MCF 10A (cell line): ENCODE measurements at regions of chr5 and their contacts with region 1.

Region 1: DNA sequence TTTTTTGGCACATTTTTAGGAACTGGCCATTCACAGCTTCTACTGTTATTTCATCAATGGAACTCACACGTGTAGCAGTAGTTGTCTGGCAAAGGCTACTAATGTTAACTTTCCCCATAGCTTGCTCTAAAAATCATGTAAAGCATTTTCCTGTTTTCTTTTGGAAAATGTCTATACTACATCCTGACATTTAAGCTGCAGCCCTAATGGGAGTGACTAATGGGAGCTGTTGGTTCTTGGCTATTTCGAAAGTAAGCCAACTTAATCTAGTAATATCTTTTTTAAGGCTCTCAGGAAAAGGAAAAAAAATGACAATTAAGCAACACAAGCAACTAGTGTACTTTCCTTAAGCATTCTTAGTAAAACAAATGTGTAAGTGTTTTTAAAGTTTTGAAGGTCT is 169.2 kb downstream of the SLC12A2 start:
- DNase-seq: peak; percentile 42
- H3K4me3 Mint-ChIP-seq: no peak overlapping the region
- H3K27ac Mint-ChIP-seq: no peak overlapping the region
- H3K4me1 Mint-ChIP-seq: peaks cover 10% of the 10 kb centered on the region
- H3K27me3 Mint-ChIP-seq: no peaks in the 10 kb centered on the region
- CTCF ChIP-seq: no peak

Region 2: DNA sequence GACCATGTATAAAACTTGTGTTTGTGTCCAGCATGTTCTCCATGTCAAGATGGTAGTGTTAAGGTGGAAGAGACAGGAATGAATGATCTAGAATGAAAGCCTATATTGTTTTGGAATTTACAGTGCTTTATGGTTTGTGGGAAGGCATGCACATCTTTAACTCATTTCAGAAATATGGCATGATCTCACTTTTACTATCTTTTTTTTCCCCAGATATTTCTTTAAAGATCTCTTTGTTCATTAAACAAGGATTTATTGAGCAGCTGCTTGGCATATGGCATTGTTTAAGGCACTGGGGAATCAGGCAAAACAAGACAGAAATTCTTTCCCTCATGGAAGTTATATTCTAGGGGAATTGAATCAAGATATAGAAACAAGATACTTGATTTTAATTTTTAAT is 117.5 kb before region 1 on chr5:
- CTCF ChIA-PET with region 1: no interaction called
- POLR2A ChIA-PET with region 1: no interaction called
- intact Hi-C with region 1: no loop called
- DNase-seq: no peak
- H3K4me3 Mint-ChIP-seq: no peak overlapping the region
- H3K27ac Mint-ChIP-seq: no peak overlapping the region
- H3K4me1 Mint-ChIP-seq: no peaks in the 10 kb centered on the region
- H3K27me3 Mint-ChIP-seq: no peaks in the 10 kb centered on the region
- CTCF ChIP-seq: no peak

Region 3: GRCh38 chr5:128241051-128241695 is 11.6 kb before region 1 on chr5:
- CTCF ChIA-PET with region 1: interaction called, 13 read pairs
- POLR2A ChIA-PET with region 1: no interaction called
- intact Hi-C with region 1: no loop called
- DNase-seq: no peak
- H3K4me3 Mint-ChIP-seq: no peak overlapping the region
- H3K27ac Mint-ChIP-seq: no peak overlapping the region
- H3K4me1 Mint-ChIP-seq: no peaks in the 10 kb centered on the region
- H3K27me3 Mint-ChIP-seq: no peaks in the 10 kb centered on the region
- CTCF ChIP-seq: no peak